Astrocyte of the cerebellum (primary cell): ENCODE measurements at regions of chr12 and their contacts with region 1.

Region 1: DNA sequence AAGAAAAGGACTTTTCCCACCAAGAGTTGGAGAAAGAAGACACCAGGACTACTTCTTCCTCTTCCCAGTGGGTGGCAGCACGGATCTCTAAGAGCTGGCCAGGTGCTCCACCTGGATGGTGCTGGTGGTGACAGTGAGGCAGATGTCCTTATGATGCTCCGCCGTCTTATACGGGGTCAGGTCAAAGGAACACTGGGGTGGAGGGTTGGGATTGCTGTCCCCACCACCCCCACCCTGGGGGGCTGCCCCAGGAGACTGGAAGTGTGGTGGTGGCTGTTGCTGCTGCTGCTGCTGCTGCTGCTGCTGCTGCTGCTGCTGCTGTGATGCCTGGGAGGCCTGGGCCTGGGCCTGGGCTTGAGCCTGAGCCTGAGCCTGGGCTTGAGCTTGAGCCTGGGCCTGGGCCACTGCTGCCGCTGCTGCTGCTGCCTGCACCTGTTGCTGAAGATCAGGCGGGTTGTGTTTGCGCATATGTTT is 4.7 kb upstream of the ING4 start:
- DNase-seq: no peak
- H3K4me3 ChIP-seq: no peak overlapping the region
- CTCF ChIP-seq: peak; percentile 11

Region 2: DNA sequence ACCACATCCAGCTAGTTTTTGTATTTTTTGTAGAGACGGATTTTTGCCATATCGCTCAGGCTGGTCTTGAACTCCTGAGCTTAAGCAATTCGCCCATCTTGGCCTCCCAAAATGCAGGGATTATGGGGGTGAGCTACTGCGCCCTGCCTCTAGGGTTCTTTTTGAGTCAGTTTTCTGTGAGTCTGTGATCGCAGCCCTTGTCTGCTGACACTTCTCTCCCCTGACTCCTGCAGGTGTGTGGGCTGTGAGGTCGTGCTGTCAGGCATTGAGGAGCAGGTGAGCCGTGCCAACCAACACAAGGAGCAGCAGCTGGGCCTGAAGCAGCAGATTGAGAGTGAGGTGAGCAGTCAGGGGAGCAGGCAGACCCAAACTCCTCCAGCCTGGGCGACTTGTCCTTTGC is 62.5 kb after region 1 on chr12:
- in situ Hi-C with region 1: loop called (anchors 5 kb)
- DNase-seq: no peak
- H3K4me3 ChIP-seq: no peak overlapping the region
- CTCF ChIP-seq: no peak